MCF 10A (cell line): ENCODE measurements at regions of chr11 and their contacts with region 1.

Region 1: GRCh38 chr11:61173456-61173855 is 12.2 kb upstream of the VPS37C start:
- DNase-seq: peak; percentile 48
- H3K4me3 Mint-ChIP-seq: no peak overlapping the region
- H3K27ac Mint-ChIP-seq: no peak overlapping the region
- H3K4me1 Mint-ChIP-seq: peaks cover 9% of the 10 kb centered on the region
- H3K27me3 Mint-ChIP-seq: peaks cover 56% of the 10 kb centered on the region
- CTCF ChIP-seq: peak; percentile 27

Region 2: DNA sequence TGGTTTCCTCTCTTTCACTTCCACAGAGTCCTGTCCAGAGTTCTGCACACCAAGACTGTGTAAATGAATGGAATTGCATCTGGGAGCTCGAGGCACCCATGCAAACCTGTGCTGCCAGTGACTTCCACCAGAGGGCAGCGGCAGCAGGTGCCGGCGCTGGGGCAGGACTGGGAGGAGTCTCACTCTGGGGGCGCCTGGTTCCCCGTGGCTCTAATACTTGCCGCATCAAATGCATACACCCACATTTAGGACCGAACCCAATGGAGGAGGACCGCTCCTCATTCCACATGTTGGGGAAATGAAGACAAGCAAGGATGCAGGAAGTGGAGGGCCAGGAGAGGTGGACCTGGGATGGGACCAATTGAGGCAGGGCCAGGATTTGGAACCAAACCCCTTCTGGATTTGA is 203.1 kb before region 1 on chr11:
- CTCF ChIA-PET with region 1: no interaction called
- POLR2A ChIA-PET with region 1: no interaction called
- intact Hi-C with region 1: loop called (anchors 1 kb)
- DNase-seq: peak; percentile 54
- H3K4me3 Mint-ChIP-seq: no peak overlapping the region
- H3K27ac Mint-ChIP-seq: no peak overlapping the region
- H3K4me1 Mint-ChIP-seq: no peaks in the 10 kb centered on the region
- H3K27me3 Mint-ChIP-seq: no peaks in the 10 kb centered on the region
- CTCF ChIP-seq: peak; percentile 73

Region 3: DNA sequence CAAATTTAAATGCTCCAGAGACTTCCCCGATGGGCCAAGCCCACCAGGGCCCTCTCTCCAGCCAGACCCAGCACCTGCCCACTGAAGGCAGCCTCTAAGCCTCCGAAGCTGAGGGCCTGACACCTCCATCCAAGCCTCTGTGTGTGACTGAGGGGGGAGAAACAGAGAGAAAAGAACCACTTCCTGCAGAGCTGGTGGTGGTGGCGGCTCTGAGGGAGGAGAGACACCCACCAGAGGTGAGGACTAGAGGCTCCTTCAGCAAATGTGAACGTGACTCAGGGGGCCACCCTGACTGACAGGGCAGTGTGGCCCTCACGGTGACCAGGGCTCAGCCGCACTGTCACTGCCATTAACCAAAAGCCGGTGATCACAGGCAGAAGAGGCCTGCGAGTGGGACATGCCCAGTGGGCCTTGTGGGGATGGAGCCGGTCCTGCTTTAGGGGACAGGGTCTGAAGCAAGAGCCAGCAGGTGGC is 102.2 kb before region 1 on chr11:
- CTCF ChIA-PET with region 1: no interaction called
- POLR2A ChIA-PET with region 1: no interaction called
- intact Hi-C with region 1: no loop called
- DNase-seq: no peak
- H3K4me3 Mint-ChIP-seq: no peak overlapping the region
- H3K27ac Mint-ChIP-seq: no peak overlapping the region
- H3K4me1 Mint-ChIP-seq: peaks cover 6% of the 10 kb centered on the region
- H3K27me3 Mint-ChIP-seq: no peaks in the 10 kb centered on the region
- CTCF ChIP-seq: no peak

Region 4: GRCh38 chr11:61187505-61188130 is 14.2 kb after region 1 on chr11:
- CTCF ChIA-PET with region 1: interaction called, 49 read pairs
- POLR2A ChIA-PET with region 1: no interaction called
- intact Hi-C with region 1: no loop called
- DNase-seq: peak; percentile 73
- H3K4me3 Mint-ChIP-seq: no peak overlapping the region
- H3K27ac Mint-ChIP-seq: no peak overlapping the region
- H3K4me1 Mint-ChIP-seq: no peaks in the 10 kb centered on the region
- H3K27me3 Mint-ChIP-seq: no peaks in the 10 kb centered on the region
- CTCF ChIP-seq: peak; percentile 88

Region 5: GRCh38 chr11:61361686-61362541 is 188.5 kb after region 1 on chr11 and contains the starts of genes CYB561A3 and TMEM138:
- CTCF ChIA-PET with region 1: no interaction called
- POLR2A ChIA-PET with region 1: no interaction called
- intact Hi-C with region 1: no loop called
- DNase-seq: peak; percentile 92
- H3K4me3 Mint-ChIP-seq: peak within 1 kb of the TSS; percentile 93
- H3K27ac Mint-ChIP-seq: peak within 1 kb of the TSS; percentile 94
- H3K4me1 Mint-ChIP-seq: peaks cover 19% of the 10 kb centered on the region
- H3K27me3 Mint-ChIP-seq: no peaks in the 10 kb centered on the region
- CTCF ChIP-seq: no peak
- total RNA-seq, gene CYB561A3: 28.4 and 28.8 TPM in 2 replicates
- total RNA-seq, gene TMEM138: 39.9 and 46.5 TPM in 2 replicates